ENCODE measurements at regions of chr19 and their contacts with region 1.

Region 1: GRCh38 chr19:13060964-13061927 is 41.4 kb downstream of the LYL1 start:
- DNase-seq: peak; percentile 80
- H3K4me3 Mint-ChIP-seq: peak overlapping the region; percentile 66
- H3K27ac Mint-ChIP-seq: peak overlapping the region; percentile 20
- H3K4me1 Mint-ChIP-seq: no peaks in the 10 kb centered on the region
- H3K27me3 Mint-ChIP-seq: peaks cover 16% of the 10 kb centered on the region
- CTCF ChIP-seq: peak; percentile 66

Region 2: DNA sequence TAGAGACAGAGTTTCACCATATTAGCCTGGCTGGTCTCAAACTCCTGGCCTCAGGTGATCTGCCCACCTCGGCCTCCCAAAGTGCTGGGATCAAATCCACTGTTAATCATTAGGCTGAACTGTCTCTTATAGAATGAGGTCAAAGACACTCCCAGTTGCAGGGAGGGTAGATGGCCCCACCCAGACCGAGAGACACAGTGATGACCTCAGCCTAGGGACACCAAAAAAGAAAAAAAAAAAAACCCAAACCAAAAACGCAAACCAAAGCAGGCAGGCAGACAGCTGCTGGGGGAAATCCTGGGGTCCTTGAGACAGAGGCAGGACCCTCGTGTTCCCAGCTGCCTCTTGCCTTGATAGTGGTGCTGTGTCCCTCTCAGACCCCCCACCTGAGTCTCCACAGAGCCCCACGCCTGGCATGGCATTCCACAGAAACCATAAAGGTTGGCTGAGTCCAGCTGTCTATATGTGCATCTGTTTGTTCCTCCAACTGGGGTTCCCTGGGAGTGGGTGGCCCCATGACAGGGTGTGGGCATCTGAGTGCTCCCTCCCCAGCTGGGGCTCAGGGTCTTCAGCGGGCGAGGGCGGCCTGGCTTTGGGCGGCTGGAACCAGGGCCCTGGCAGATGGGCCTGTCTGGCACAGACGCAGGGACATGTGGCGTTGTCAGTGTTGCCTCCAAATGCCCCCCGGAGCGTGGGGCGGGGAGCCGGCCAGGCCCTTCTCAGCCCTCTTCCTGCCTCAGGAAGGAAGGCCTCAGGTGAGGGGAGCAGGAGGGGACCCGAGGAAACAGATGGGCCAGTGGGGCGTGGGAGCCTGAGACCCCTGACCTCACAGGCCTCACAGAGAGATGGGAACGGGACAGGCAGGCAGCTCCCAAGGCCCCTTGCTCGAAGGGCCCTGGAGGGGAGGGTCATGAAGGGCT is 86.7 kb before region 1 on chr19:
- CTCF ChIA-PET with region 1: interaction called, 21 read pairs
- intact Hi-C with region 1: no loop called
- DNase-seq: no peak
- H3K4me3 Mint-ChIP-seq: no peak overlapping the region
- H3K27ac Mint-ChIP-seq: no peak overlapping the region
- H3K4me1 Mint-ChIP-seq: no peaks in the 10 kb centered on the region
- H3K27me3 Mint-ChIP-seq: no peaks in the 10 kb centered on the region
- CTCF ChIP-seq: no peak

Region 3: DNA sequence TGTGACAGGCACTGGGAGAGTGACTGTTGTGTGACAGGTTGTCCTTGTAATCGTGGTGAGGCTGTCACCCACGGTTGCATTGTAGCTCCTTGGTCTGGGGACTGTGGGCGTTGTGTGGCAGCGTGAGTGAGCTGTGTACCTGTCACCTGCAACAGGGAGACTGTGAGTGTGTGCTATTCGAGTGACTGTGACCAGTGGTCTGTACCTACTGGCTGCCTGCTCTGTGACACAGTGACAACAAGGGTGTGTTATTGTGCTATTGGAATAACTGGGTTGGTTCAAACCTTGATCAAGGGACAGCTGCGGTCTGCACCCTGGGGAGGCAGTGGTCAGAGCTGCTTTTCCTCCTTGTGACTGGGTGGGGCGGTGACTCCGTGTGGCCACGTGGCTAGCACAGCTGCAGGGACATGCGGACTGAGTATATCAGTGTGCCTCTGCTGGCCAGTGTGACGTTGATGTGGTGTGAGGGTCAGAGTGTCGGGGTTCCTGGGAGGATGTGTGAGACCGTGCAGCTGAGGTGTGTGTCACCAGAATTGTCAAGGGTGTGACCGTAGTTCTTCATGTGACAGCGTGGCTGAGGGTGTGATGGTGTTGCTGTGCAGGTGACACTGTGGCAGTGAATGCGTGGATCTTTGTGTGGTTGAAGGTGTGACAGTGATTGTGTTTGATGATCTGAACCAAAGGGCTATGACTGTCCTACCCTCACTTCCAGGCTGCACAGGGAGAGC is 76.0 kb before region 1 on chr19:
- CTCF ChIA-PET with region 1: interaction called, 28 read pairs
- intact Hi-C with region 1: no loop called
- DNase-seq: peak; percentile 82
- H3K4me3 Mint-ChIP-seq: peak overlapping the region; percentile 28
- H3K27ac Mint-ChIP-seq: peak overlapping the region; percentile 11
- H3K4me1 Mint-ChIP-seq: no peaks in the 10 kb centered on the region
- H3K27me3 Mint-ChIP-seq: no peaks in the 10 kb centered on the region
- CTCF ChIP-seq: no peak

Region 4: DNA sequence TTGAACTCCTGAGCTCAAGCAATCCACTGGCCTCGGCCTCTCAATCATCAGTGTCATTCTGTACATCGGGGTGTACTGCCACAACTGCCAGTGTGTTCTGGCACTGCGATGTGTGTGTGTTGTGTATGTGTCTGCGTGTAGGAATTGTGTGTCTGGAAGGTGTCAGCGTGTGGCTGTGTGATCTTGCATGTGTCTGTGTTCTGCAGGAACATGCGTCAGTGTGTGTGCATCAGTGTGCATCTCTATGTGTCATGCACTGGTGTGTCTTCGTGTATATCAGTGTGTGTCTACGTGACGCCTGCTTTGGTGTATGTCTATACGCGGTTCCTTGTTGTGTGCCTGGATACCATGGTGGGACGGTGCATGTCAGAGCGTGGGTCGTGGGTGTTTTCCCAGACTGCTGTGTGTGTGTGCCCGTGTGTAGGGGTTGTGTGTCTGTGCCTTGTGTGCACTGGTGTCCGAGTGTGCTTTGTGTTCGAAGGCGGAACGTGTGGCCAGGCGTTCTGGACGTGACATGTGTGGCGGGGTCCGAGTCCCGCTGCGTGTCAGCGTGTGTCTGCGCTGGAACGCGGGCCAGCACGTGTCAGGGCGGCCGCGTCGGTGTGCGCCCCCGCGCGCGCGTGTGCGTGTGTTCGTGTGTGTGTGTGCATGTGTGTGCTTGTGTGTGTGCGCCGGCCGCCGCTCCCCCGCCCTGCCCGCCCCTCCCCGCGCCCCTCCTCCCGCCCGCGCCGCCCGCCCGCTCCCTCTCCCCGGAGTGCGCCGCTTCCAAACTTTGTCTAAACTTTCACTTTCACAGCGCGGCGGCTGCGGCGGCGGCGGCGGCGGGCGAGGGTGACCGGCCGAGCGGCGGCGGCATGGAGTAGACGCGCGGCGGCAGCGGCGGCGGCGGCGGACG is 66.3 kb before region 1 on chr19 and contains the start of gene NFIX:
- CTCF ChIA-PET with region 1: interaction called, 4 read pairs
- intact Hi-C with region 1: loop called (anchors 1 kb)
- DNase-seq: peak; percentile 66
- H3K4me3 Mint-ChIP-seq: peak within 1 kb of the TSS; percentile 87
- H3K27ac Mint-ChIP-seq: peak within 1 kb of the TSS; percentile 79
- H3K4me1 Mint-ChIP-seq: peaks cover 8% of the 10 kb centered on the region
- H3K27me3 Mint-ChIP-seq: peaks cover 14% of the 10 kb centered on the region
- CTCF ChIP-seq: no peak
- total RNA-seq, gene NFIX: 16.4 and 21.9 TPM in 2 replicates

Region 5: GRCh38 chr19:13033819-13034611 is 27.2 kb before region 1 on chr19:
- CTCF ChIA-PET with region 1: interaction called, 15 read pairs
- intact Hi-C with region 1: loop called (anchors 1 kb)
- DNase-seq: peak; percentile 75
- H3K4me3 Mint-ChIP-seq: no peak overlapping the region
- H3K27ac Mint-ChIP-seq: no peak overlapping the region
- H3K4me1 Mint-ChIP-seq: peaks cover 51% of the 10 kb centered on the region
- H3K27me3 Mint-ChIP-seq: no peaks in the 10 kb centered on the region
- CTCF ChIP-seq: peak; percentile 57

Region 6: GRCh38 chr19:13093407-13094105 is 32.3 kb after region 1 on chr19:
- CTCF ChIA-PET with region 1: interaction called, 15 read pairs
- intact Hi-C with region 1: no loop called
- DNase-seq: peak; percentile 71
- H3K4me3 Mint-ChIP-seq: no peak overlapping the region
- H3K27ac Mint-ChIP-seq: no peak overlapping the region
- H3K4me1 Mint-ChIP-seq: no peaks in the 10 kb centered on the region
- H3K27me3 Mint-ChIP-seq: no peaks in the 10 kb centered on the region
- CTCF ChIP-seq: peak; percentile 83